CD8-positive, alpha-beta T cell (primary cell): ENCODE measurements at regions of chr17 and their contacts with region 1.

Region 1: GRCh38 chr17:60971515-60972369 is 294.1 kb downstream of the BCAS3 start:
- DNase-seq: peak in 6 of 9 experiments; percentile 11 to 57 (median 34)
- ATAC-seq: no peak
- H3K4me3 ChIP-seq: no peak overlapping the region
- H3K4me3 Mint-ChIP-seq: no peak overlapping the region
- H3K27ac ChIP-seq: no peak overlapping the region
- H3K27ac Mint-ChIP-seq: no peak overlapping the region
- H3K4me1 ChIP-seq: no peaks in the 10 kb centered on the region
- H3K4me1 Mint-ChIP-seq: peaks cover 6% of the 10 kb centered on the region
- H3K27me3 ChIP-seq: no peaks in the 10 kb centered on the region
- H3K27me3 Mint-ChIP-seq: no peaks in the 10 kb centered on the region
- CTCF ChIP-seq: peak; percentile 55

Region 2: DNA sequence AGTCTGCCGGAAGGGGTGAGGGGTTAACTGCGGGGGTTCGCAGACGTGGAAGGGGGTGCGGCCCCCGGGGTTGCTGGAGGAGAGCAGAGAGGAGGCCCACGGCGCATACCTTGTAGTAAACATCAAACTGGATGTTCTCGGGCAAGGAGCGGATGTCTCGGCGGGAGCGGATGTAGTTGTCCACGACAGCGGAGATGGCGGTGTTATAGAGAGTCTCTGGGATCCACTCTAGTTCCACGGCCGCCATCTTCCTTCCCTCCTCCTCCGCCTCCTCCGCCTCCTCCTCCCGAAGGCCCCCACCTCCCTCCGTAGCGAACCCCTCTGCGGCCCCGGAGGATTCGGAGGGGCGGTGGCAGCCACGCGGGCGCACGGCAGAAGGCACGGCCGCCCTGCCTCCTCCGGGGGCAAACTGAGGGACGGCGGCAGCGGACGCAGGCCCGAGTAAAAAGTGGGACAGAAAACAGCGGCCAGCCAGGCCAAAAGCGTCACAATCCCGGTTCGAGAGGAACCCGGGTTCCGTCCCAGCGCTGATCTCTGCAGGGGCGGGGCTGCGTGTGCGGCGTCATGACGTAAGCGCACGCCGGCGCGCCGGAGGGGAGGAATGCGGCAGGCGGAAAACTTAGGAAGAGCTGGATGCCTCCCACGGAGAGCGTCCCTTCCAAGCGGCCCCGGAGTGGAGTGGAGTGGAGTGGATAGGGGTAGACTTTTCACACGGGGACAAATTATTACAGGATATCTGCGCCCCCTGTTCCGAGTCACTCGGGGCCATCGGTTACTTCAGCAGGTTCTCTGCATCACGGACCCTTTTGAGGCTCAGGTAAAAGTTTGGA is 445.8 kb before region 1 on chr17 and contains the start of gene APPBP2:
- CTCF ChIA-PET with region 1: no interaction called
- POLR2A ChIA-PET with region 1: no interaction called
- intact Hi-C with region 1: no loop called
- DNase-seq: peak; percentile 37 to 89 (median 73)
- ATAC-seq: peak; percentile 86
- H3K4me3 ChIP-seq: peak within 1 kb of the TSS; percentile 85 to 86
- H3K4me3 Mint-ChIP-seq: peak within 1 kb of the TSS; percentile 99
- H3K27ac ChIP-seq: peak within 1 kb of the TSS; percentile 95 to 96
- H3K27ac Mint-ChIP-seq: peak within 1 kb of the TSS; percentile 98
- H3K4me1 ChIP-seq: peaks cover 29% of the 10 kb centered on the region
- H3K4me1 Mint-ChIP-seq: peaks cover 53% of the 10 kb centered on the region
- H3K27me3 ChIP-seq: no peaks in the 10 kb centered on the region
- H3K27me3 Mint-ChIP-seq: no peaks in the 10 kb centered on the region
- CTCF ChIP-seq: no peak
- total RNA-seq, gene APPBP2: 19.9 to 20.1 TPM

Region 3: GRCh38 chr17:60874772-60875171 is 97.0 kb before region 1 on chr17:
- CTCF ChIA-PET with region 1: no interaction called
- POLR2A ChIA-PET with region 1: no interaction called
- intact Hi-C with region 1: no loop called
- DNase-seq: no peak
- ATAC-seq: no peak
- H3K4me3 ChIP-seq: no peak overlapping the region
- H3K4me3 Mint-ChIP-seq: no peak overlapping the region
- H3K27ac ChIP-seq: no peak overlapping the region
- H3K27ac Mint-ChIP-seq: no peak overlapping the region
- H3K4me1 ChIP-seq: no peaks in the 10 kb centered on the region
- H3K4me1 Mint-ChIP-seq: no peaks in the 10 kb centered on the region
- H3K27me3 ChIP-seq: no peaks in the 10 kb centered on the region
- H3K27me3 Mint-ChIP-seq: no peaks in the 10 kb centered on the region
- CTCF ChIP-seq: no peak

Region 4: GRCh38 chr17:61389670-61390478 is 418.1 kb after region 1 on chr17:
- CTCF ChIA-PET with region 1: interaction called, 3 read pairs
- POLR2A ChIA-PET with region 1: no interaction called
- intact Hi-C with region 1: loop called in 1 of 2 experiments (anchors 1 kb)
- DNase-seq: peak in 5 of 9 experiments; percentile 28 to 63 (median 55)
- ATAC-seq: no peak
- H3K4me3 ChIP-seq: no peak overlapping the region
- H3K4me3 Mint-ChIP-seq: no peak overlapping the region
- H3K27ac ChIP-seq: no peak overlapping the region
- H3K27ac Mint-ChIP-seq: no peak overlapping the region
- H3K4me1 ChIP-seq: no peaks in the 10 kb centered on the region
- H3K4me1 Mint-ChIP-seq: peaks cover 7% of the 10 kb centered on the region
- H3K27me3 ChIP-seq: no peaks in the 10 kb centered on the region
- H3K27me3 Mint-ChIP-seq: peaks cover 15% of the 10 kb centered on the region
- CTCF ChIP-seq: peak; percentile 70

Region 5: DNA sequence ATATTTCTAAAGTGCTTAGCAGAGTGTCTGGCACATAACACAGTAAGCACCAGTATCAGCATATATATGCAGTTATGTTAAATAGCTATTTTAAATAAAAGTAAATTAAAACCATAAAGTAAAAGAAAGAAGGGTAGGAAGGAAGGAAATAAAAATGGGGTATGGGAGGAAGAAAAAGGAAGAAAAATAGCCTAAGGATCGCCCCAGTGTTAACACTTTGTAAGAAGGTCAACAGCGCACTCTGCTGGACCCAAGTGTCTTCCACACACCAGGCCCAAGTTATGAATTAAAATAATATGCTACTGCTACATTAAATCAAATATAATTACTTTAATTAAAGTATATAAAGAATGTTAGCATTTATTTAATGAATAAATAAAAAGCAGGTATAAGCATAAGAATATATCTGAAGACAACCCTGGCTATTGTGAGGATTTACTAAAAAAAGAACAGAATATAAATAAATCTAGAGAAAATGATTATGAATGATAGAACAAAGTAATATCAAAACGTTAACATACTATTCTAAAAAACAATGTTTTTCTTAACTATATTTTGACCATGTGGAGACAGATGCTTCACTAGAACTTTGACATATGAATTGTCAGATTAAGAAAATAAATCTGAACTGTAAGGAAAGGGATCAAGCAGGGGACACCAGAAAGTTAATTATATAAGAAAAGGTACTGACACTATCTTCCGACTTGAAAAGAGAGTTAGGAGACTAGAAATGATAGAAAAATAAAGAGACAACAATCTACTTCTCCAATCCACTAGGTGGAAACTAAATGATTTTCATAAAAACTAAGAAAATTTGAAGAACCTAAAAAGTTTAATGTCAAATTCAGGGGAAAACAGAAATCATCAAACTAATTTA is 865.7 kb after region 1 on chr17:
- CTCF ChIA-PET with region 1: no interaction called
- POLR2A ChIA-PET with region 1: no interaction called
- intact Hi-C with region 1: loop called in 1 of 2 experiments (anchors 10 kb)
- DNase-seq: peak; percentile 11 to 69 (median 45)
- ATAC-seq: peak; percentile 48
- H3K4me3 ChIP-seq: no peak overlapping the region
- H3K4me3 Mint-ChIP-seq: no peak overlapping the region
- H3K27ac ChIP-seq: no peak overlapping the region
- H3K27ac Mint-ChIP-seq: no peak overlapping the region
- H3K4me1 ChIP-seq: no peaks in the 10 kb centered on the region
- H3K4me1 Mint-ChIP-seq: no peaks in the 10 kb centered on the region
- H3K27me3 ChIP-seq: no peaks in the 10 kb centered on the region
- H3K27me3 Mint-ChIP-seq: no peaks in the 10 kb centered on the region
- CTCF ChIP-seq: peak; percentile 77